Natural killer cell (primary cell): ENCODE measurements at regions of chr1 and their contacts with region 1.

Region 1: DNA sequence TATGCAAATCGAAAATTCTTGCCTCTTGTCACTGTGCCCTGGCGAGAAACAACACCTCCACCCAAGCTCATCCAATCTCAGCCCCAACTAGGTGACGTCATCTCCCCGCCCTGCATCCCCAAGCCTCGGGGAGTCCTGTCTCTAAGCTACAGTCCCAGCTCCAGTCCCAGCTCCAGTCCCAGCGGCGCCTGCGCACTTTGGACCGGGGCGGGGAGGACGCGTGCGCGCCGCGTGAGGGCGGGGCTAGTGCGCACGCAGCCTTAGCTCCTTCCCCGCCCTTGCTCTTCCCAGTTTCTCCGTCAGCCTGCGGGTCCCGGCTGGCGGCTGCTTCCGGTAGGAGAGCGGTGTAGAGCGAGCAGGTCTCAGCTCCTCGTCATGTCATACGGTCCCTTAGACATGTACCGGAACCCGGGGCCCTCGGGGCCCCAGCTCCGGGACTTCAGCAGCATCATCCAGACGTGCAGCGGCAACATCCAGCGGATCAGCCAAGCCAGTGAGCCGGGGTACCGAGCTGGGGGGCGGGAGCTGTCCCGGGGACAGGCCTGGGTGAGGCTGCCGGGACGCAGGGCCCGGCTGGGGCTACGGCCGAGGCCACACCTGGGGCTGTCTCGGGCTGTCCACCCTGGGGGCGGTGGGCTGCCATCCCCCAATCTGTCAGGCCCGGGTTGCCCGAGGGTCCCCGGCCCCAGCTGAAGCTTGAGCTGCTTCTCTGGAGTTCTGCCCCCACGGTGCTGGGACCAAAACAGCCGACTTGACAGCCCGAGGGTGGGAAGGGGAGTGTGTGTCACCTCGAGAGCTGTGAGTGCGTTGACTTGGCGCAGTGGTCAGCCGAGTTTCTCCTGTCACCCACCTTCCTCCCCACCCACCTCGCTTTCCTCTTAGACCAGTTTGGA is at the start of gene STX12:
- DNase-seq: peak; percentile 97 to 100
- ATAC-seq: peak; percentile 85 to 95 (median 91)
- H3K4me3 ChIP-seq: peak within 1 kb of the TSS; percentile 86
- H3K4me3 Mint-ChIP-seq: peak within 1 kb of the TSS; percentile 97
- H3K27ac ChIP-seq: peak within 1 kb of the TSS; percentile 90
- H3K27ac Mint-ChIP-seq: peak within 1 kb of the TSS; percentile 95 to 97
- H3K4me1 ChIP-seq: peaks cover 9% of the 10 kb centered on the region
- H3K4me1 Mint-ChIP-seq: peaks cover 19 to 28% of the 10 kb centered on the region in 2 donors
- H3K27me3 ChIP-seq: no peaks in the 10 kb centered on the region
- H3K27me3 Mint-ChIP-seq: no peaks in the 10 kb centered on the region
- CTCF ChIP-seq: no peak
- total RNA-seq, gene STX12: 29.6 to 36.2 (median 32.3) TPM

Region 2: GRCh38 chr1:27643701-27644625 is 129.2 kb before region 1 on chr1:
- intact Hi-C with region 1: no loop called
- DNase-seq: peak; percentile 65 to 89
- ATAC-seq: peak; percentile 94 to 100 (median 100)
- H3K4me3 ChIP-seq: no peak overlapping the region
- H3K4me3 Mint-ChIP-seq: no peak overlapping the region
- H3K27ac ChIP-seq: peak overlapping the region; percentile 53
- H3K27ac Mint-ChIP-seq: peak overlapping the region; percentile 76 to 80
- H3K4me1 ChIP-seq: peaks cover 18% of the 10 kb centered on the region
- H3K4me1 Mint-ChIP-seq: peaks cover 13 to 28% of the 10 kb centered on the region in 2 donors
- H3K27me3 ChIP-seq: no peaks in the 10 kb centered on the region
- H3K27me3 Mint-ChIP-seq: no peaks in the 10 kb centered on the region
- CTCF ChIP-seq: peak; percentile 88

Region 3: GRCh38 chr1:27671964-27672749 is 101.0 kb before region 1 on chr1 and contains the start of gene IFI6:
- intact Hi-C with region 1: loop called (anchors 5 kb)
- DNase-seq: peak; percentile 65 to 92
- ATAC-seq: peak; percentile 91 to 95 (median 91)
- H3K4me3 ChIP-seq: peak within 1 kb of the TSS; percentile 48
- H3K4me3 Mint-ChIP-seq: peak within 1 kb of the TSS; percentile 97
- H3K27ac ChIP-seq: peak within 1 kb of the TSS; percentile 85
- H3K27ac Mint-ChIP-seq: peak within 1 kb of the TSS; percentile 87 to 96
- H3K4me1 ChIP-seq: peaks cover 33% of the 10 kb centered on the region
- H3K4me1 Mint-ChIP-seq: peaks cover 28 to 29% of the 10 kb centered on the region in 2 donors
- H3K27me3 ChIP-seq: no peaks in the 10 kb centered on the region
- H3K27me3 Mint-ChIP-seq: no peaks in the 10 kb centered on the region
- CTCF ChIP-seq: peak; percentile 36
- total RNA-seq, gene IFI6: 26.7 to 36.0 (median 34.8) TPM

Region 4: GRCh38 chr1:27725374-27726173 is 47.6 kb before region 1 on chr1 and contains the start of gene FAM76A:
- intact Hi-C with region 1: loop called (anchors 1 kb)
- DNase-seq: peak; percentile 99 to 100
- ATAC-seq: peak; percentile 90 to 98 (median 91)
- H3K4me3 ChIP-seq: peak within 1 kb of the TSS; percentile 79
- H3K4me3 Mint-ChIP-seq: peak within 1 kb of the TSS; percentile 93
- H3K27ac ChIP-seq: peak within 1 kb of the TSS; percentile 88
- H3K27ac Mint-ChIP-seq: peak within 1 kb of the TSS; percentile 96 to 97
- H3K4me1 ChIP-seq: peaks cover 18% of the 10 kb centered on the region
- H3K4me1 Mint-ChIP-seq: peaks cover 5 to 19% of the 10 kb centered on the region in 2 donors
- H3K27me3 ChIP-seq: no peaks in the 10 kb centered on the region
- H3K27me3 Mint-ChIP-seq: no peaks in the 10 kb centered on the region
- CTCF ChIP-seq: peak; percentile 44
- total RNA-seq, gene FAM76A: 19.5 to 21.8 (median 19.6) TPM